Calu3 (cell line): ENCODE measurements at regions of chr3 and their contacts with region 1.

Region 1: GRCh38 chr3:26719134-26719533 is 96.6 kb downstream of the LRRC3B start:
- DNase-seq: no peak
- H3K4me3 Mint-ChIP-seq: no peak overlapping the region
- H3K27ac Mint-ChIP-seq: no peak overlapping the region
- H3K4me1 Mint-ChIP-seq: no peaks in the 10 kb centered on the region
- H3K27me3 Mint-ChIP-seq: no peaks in the 10 kb centered on the region
- CTCF ChIP-seq: no peak

Region 2: GRCh38 chr3:26345613-26346012 is 373.5 kb before region 1 on chr3:
- CTCF ChIA-PET with region 1: no interaction called
- intact Hi-C with region 1: no loop called
- DNase-seq: no peak
- H3K4me3 Mint-ChIP-seq: no peak overlapping the region
- H3K27ac Mint-ChIP-seq: no peak overlapping the region
- H3K4me1 Mint-ChIP-seq: no peaks in the 10 kb centered on the region
- H3K27me3 Mint-ChIP-seq: no peaks in the 10 kb centered on the region
- CTCF ChIP-seq: no peak

Region 3: GRCh38 chr3:26358405-26358804 is 360.7 kb before region 1 on chr3:
- CTCF ChIA-PET with region 1: no interaction called
- intact Hi-C with region 1: loop called (anchors 5 kb)
- DNase-seq: no peak
- H3K4me3 Mint-ChIP-seq: no peak overlapping the region
- H3K27ac Mint-ChIP-seq: no peak overlapping the region
- H3K4me1 Mint-ChIP-seq: no peaks in the 10 kb centered on the region
- H3K27me3 Mint-ChIP-seq: no peaks in the 10 kb centered on the region
- CTCF ChIP-seq: no peak

Region 4: GRCh38 chr3:26862953-26863352 is 143.8 kb after region 1 on chr3:
- CTCF ChIA-PET with region 1: no interaction called
- intact Hi-C with region 1: no loop called
- DNase-seq: no peak
- H3K4me3 Mint-ChIP-seq: no peak overlapping the region
- H3K27ac Mint-ChIP-seq: no peak overlapping the region
- H3K4me1 Mint-ChIP-seq: peaks cover 15% of the 10 kb centered on the region
- H3K27me3 Mint-ChIP-seq: no peaks in the 10 kb centered on the region
- CTCF ChIP-seq: no peak